ENCODE measurements at regions of chr19 and their contacts with region 1.

Region 1: DNA sequence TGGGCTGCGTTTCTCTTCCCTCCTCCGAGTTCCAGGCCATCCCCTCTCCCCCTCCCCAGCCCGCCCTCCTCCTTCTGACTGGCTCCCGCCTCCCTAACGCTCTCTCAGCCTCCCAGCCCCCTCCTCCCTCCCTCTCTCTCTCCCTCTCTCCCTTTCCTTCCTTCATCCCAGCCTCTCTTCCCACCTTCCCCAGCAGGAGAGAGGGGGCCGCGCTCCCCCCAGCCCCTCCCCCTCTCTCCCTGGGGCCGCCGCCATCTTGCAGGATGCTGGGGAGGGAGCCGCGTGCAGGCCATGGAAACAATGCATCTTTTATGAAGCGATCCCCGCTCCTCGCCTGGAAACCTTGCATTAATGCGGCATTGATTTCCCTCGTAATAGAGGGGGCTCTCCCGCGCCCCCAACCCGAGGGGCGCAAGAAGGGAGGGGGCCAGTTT is 42.6 kb upstream of the ADGRL1 start:
- DNase-seq: peak; percentile 35
- H3K4me3 ChIP-seq: peak overlapping the region; percentile 32 to 56 (median 50)
- H3K27ac ChIP-seq: peak overlapping the region; percentile 54 to 68 (median 58)
- H3K4me1 ChIP-seq: peaks cover 5 to 21% (median 16%) of the 10 kb centered on the region in 4 donors
- H3K27me3 ChIP-seq: peaks cover 13% of the 10 kb centered on the region
- CTCF ChIP-seq: no peak
- EP300 ChIP-seq: no peak
- POLR2A ChIP-seq: no peak

Region 2: DNA sequence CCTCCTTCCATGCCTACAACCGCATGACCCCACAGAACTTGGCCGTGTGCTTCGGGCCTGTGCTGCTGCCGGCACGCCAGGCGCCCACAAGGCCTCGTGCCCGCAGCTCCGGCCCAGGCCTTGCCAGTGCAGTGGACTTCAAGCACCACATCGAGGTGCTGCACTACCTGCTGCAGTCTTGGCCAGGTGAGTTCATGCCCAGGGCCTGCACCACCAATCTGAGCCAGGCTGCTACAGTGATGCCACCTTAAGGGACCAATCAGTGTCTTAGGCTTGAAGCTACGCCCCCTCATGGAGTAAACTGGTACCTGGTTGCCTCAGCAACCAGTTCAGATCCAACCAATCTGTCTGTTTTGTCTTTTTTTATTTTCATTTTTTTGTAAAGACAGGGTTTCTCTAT is 863.8 kb after region 1 on chr19:
- in situ Hi-C with region 1: no loop called
- intact Hi-C with region 1: loop called (anchors 5 kb)
- DNase-seq: no peak
- H3K4me3 ChIP-seq: no peak overlapping the region
- H3K27ac ChIP-seq: no peak overlapping the region
- H3K4me1 ChIP-seq: peaks cover 0 to 16% (median 2%) of the 10 kb centered on the region in 4 donors
- H3K27me3 ChIP-seq: peaks cover 18% of the 10 kb centered on the region
- CTCF ChIP-seq: no peak
- EP300 ChIP-seq: no peak
- POLR2A ChIP-seq: no peak